ENCODE measurements at regions of chr12 and their contacts with region 1.

Region 1: DNA sequence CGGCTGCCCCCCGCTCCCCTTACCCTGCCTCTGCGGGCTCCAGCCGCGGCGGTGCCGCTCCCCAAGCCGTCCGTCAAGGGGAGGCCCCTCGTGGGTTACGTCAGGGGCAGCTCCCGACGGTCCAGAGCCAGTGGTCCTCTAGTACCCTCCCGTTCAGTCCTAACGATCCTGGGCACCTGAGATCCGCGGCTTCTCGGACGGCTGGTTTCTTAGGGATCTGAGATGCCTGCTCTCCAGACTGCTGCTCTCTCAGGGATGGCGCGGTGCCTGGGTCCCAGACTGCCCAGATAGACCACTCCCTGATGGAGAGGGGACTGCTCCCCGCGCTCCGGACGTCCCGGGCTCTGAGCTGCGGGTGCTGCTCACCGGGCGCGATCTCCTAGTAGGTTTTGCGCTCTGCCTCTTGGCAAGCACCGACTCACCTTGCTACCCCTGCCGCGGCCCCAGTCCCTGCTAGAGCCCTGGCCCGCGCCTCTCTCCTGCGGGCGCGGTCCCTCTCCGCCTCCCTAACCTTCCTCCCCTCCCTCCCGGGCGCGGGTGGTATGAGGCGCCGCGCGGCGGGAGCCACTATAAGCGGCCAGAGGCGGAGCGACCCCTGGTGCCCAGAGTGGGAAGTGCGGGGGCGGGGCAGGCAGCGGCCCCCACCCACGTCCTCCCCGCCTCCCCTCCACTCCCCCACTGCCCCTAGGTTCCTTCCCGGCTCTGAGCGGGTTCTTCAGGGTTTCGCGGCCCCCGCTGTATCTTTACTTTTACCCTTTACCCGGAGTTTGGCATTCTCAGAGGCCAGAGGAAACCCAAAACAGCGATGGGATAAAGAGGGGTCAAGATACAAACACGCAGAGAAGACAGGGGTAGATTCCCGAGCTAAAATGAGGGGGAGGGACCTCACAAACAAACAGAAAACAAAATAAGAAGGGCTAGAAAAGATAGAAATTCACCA is at the start of gene C1QL4:
- DNase-seq: peak; percentile 89
- CTCF ChIP-seq: peak; percentile 88

Region 2: DNA sequence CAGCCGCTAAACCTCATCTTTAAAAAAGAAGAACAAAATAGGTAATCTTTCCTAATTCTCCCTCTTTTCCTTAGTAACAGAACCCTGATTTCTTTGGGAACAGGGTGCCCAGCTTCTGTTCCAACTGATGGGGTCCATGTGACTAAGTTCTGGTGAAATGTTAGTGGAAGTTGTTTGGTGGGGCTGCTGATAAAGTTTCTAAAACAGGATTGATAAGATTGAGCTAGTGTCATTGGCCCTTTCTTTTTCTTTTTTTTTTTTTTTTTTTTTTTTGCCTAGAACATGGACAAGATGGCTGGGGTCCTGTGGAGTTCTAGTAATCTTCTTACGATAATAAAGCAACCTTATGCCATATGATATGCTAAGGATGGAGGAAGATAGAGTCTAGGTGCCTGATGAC is 189.5 kb before region 1 on chr12:
- CTCF ChIA-PET with region 1: no interaction called
- POLR2A ChIA-PET with region 1: no interaction called
- DNase-seq: no peak
- CTCF ChIP-seq: no peak

Region 3: GRCh38 chr12:49212572-49212971 is 124.3 kb before region 1 on chr12:
- CTCF ChIA-PET with region 1: no interaction called
- POLR2A ChIA-PET with region 1: no interaction called
- DNase-seq: no peak
- CTCF ChIP-seq: no peak

Region 4: GRCh38 chr12:49322708-49323523 is 14.0 kb before region 1 on chr12 and contains the start of gene TROAP:
- CTCF ChIA-PET with region 1: interaction called, 42 read pairs
- POLR2A ChIA-PET with region 1: interaction called, 4 read pairs
- DNase-seq: peak; percentile 99
- CTCF ChIP-seq: no peak

Region 5: DNA sequence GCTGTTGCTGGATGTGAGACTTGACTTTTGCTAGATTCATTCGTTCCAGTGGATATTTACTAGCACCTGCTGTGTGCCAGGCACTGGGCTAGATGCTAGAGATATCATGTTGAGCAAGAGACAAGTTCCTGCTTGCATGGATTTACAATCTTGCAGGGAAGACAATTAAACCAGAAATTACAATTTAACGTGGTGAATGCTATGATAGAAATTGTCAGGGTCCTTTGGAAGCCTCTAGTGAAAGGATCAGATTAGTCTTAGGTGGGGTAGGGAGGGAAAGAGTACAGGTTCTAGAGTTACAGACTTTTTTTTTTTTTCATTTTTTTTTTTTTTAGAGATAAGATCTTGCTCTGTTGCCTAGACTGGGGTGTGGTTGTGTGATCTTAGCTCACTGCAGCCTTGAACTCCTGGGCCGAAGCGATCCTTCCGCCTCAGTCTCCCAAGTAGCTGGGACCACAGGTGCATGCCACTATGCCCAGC is 67.1 kb after region 1 on chr12:
- CTCF ChIA-PET with region 1: no interaction called
- POLR2A ChIA-PET with region 1: no interaction called
- DNase-seq: no peak
- CTCF ChIP-seq: no peak

Measured in GM10248 (cell line).